ENCODE measurements at regions of chr4 and their contacts with region 1.

Region 1: DNA sequence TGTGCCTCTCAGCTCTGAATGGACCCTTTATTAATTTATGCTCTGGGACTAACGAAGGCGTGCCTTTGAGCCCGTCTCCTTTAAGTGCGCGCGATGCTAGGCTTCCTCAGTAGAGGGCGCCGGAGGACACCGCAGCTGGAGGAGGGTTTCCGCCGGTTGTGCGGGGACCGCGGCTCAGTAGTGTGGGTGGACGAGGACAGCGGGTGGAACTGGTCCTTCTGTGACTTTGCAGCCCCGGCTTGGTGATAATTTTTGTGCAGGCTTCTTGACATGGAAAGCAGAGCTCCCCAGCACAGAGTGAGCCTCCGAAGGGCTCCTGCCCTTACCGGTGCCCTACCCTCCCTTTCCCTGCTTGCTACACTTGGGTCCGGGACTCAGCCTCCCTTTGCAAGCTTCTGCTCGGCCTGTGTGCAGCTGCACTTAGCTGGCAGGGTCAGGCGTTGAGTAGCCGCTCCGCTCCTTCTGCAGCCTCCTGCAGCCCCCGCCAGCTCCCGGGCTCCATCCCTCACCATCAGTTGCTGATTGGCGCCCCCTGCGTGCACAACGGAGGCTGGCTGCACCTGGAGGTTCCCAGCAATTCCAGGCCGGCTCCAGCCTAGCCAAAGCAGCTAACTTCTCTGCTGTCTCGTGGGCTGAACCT is 26.8 kb upstream of the BOD1L1 start:
- DNase-seq: peak; percentile 62
- H3K4me3 ChIP-seq: peak overlapping the region; percentile 54 to 61 (median 54)
- H3K27ac ChIP-seq: no peak overlapping the region
- H3K4me1 ChIP-seq: peaks cover 18% of the 10 kb centered on the region
- H3K27me3 ChIP-seq: no peaks in the 10 kb centered on the region
- CTCF ChIP-seq: peak; percentile 90 to 96

Region 2: DNA sequence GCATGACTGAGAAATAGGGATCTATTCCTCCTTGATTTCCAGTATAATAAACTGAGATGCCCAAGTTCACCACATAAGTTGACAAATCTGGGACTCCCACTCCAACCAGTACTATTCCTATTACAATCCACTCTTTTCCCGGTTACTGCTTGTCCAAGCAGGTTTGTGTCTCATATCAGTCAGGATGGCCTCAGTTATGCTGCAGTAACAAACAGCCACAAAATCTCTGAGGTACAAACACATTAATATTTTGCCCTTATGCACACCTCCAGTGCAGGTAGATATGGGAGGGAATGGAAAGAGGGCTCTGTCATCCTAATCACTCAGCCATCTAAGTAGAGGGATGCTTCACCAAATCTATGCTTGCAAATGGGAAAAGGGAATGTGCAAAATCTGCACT is 377.9 kb before region 1 on chr4:
- CTCF ChIA-PET with region 1: no interaction called
- dilution Hi-C with region 1: no loop called
- in situ Hi-C with region 1: no loop called
- intact Hi-C with region 1: no loop called
- DNase-seq: no peak
- H3K4me3 ChIP-seq: no peak overlapping the region
- H3K27ac ChIP-seq: no peak overlapping the region
- H3K4me1 ChIP-seq: no peaks in the 10 kb centered on the region
- H3K27me3 ChIP-seq: no peaks in the 10 kb centered on the region
- CTCF ChIP-seq: no peak

Region 3: GRCh38 chr4:13881892-13882291 is 227.6 kb after region 1 on chr4:
- CTCF ChIA-PET with region 1: no interaction called
- dilution Hi-C with region 1: no loop called
- in situ Hi-C with region 1: loop called in 1 of 2 experiments (anchors 25 kb)
- intact Hi-C with region 1: loop called (anchors 1 kb)
- DNase-seq: no peak
- H3K4me3 ChIP-seq: no peak overlapping the region
- H3K27ac ChIP-seq: no peak overlapping the region
- H3K4me1 ChIP-seq: no peaks in the 10 kb centered on the region
- H3K27me3 ChIP-seq: no peaks in the 10 kb centered on the region
- CTCF ChIP-seq: peak in 1 of 2 donors; percentile 46

Region 4: DNA sequence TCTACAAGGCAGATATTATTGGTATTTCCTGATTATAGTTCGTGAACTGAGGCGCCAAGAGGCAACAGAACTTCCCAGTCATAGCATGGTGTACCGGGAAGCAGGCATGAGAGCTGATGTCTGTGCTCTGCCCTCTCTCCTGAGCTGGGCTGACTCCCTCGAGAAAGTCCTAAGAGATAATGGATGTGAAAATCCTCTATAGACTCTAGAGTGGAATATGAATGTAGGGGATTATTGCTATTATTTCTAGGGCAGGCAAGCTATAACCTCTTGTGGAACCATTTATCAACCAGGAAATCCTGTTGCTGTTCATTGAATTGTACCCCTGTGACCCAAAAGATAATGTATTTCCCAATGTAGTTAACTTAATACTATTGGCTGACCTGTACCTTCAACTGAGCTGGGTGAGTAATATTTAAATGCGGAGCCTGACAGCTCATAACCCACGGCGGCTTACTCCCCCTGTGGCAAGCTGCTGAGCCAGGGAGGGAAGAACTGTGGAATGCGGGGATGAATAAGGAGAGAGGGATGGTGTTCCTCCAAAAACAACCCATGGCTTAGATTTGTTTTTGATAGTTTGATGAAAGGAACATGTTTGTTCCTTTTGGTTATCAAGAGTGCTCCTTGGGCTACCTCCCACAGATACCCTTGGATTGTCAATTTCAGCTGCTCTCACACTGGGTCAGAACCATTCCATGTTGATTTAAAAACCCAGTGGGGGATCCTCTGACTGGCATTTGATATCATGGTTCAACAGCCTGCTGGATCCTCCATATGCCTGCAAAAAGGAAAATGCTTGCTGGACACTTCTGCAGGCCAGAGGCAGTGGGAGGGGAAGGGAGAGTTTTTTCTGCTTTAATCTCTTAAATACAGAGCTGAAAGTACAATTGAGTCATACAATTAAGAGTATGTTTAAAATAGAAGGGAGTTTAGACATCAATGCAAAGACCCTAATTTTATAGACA is 312.2 kb after region 1 on chr4:
- CTCF ChIA-PET with region 1: no interaction called
- dilution Hi-C with region 1: no loop called
- in situ Hi-C with region 1: no loop called
- intact Hi-C with region 1: loop called (anchors 5 kb)
- DNase-seq: peak; percentile 46
- H3K4me3 ChIP-seq: no peak overlapping the region
- H3K27ac ChIP-seq: no peak overlapping the region
- H3K4me1 ChIP-seq: peaks cover 8% of the 10 kb centered on the region
- H3K27me3 ChIP-seq: no peaks in the 10 kb centered on the region
- CTCF ChIP-seq: no peak

Region 5: GRCh38 chr4:14294611-14295010 is 640.3 kb after region 1 on chr4:
- CTCF ChIA-PET with region 1: no interaction called
- dilution Hi-C with region 1: no loop called
- in situ Hi-C with region 1: no loop called
- intact Hi-C with region 1: loop called (anchors 10 kb)
- DNase-seq: no peak
- H3K4me3 ChIP-seq: no peak overlapping the region
- H3K27ac ChIP-seq: no peak overlapping the region
- H3K4me1 ChIP-seq: peaks cover 6% of the 10 kb centered on the region
- H3K27me3 ChIP-seq: no peaks in the 10 kb centered on the region
- CTCF ChIP-seq: no peak

Region 6: DNA sequence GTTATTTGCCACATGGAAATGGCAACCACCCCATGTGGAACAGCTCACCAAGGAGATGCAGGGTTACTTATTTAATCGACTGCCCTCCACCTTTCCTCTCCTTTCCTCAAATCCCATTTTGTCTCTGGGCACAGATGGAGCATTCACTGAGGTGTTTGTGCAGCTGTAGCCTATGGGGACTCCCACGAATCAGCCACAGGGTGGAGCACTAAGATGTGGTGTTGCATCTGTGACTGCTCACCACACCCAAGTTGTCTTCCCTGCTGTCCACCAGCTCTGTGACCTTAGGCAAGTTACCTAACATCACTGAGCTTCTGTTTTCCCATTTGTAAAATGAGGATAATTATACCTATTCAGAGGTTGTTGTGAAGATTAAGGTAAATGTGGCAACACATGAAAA is 1095.6 kb after region 1 on chr4:
- CTCF ChIA-PET with region 1: no interaction called
- dilution Hi-C with region 1: no loop called
- in situ Hi-C with region 1: no loop called
- intact Hi-C with region 1: loop called (anchors 10 kb)
- DNase-seq: peak; percentile 47
- H3K4me3 ChIP-seq: no peak overlapping the region
- H3K27ac ChIP-seq: no peak overlapping the region
- H3K4me1 ChIP-seq: no peaks in the 10 kb centered on the region
- H3K27me3 ChIP-seq: no peaks in the 10 kb centered on the region
- CTCF ChIP-seq: peak; percentile 41 to 76

Region 7: DNA sequence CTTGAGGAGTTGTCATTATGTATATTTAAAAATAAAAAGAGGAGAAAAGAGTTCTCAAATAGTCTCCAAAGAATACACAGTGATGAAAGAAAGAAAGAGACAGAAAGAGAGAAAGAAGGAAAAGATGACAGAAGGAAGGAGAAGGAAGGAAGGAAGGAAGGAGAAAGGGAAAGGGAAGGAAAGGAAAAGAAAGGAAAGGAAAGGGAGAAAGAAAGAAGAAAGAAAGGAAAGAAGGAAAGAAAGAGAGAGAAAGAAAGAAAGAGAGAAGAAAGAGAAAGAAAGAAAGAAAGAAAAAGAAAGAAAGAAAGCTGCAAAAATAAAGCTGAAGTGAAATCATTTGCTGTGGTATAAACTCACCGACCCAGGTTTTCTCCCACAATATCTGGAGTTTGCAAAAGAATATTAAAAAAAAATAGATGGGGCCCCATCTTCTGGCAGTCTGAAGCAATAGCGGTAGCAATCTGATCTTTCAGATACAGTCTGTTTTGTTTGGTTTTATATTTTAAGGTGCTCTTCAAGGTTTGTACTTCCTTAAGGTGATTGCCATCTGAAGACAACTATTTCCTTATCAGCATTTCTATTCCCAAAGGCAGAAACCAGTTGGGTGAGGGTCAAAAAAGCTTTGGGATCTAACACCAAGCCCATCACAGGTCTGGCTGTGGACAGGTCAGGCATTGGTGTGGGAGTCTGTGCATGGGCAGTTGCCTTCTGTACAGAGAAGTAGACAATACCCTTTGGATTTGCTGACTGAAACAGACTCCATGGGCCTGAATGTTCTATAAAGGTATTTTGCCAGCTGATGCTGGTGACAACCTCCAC is 1508.4 kb after region 1 on chr4:
- CTCF ChIA-PET with region 1: no interaction called
- dilution Hi-C with region 1: no loop called
- in situ Hi-C with region 1: no loop called
- intact Hi-C with region 1: loop called (anchors 5 kb)
- DNase-seq: no peak
- H3K4me3 ChIP-seq: no peak overlapping the region
- H3K27ac ChIP-seq: no peak overlapping the region
- H3K4me1 ChIP-seq: no peaks in the 10 kb centered on the region
- H3K27me3 ChIP-seq: peaks cover 3% of the 10 kb centered on the region
- CTCF ChIP-seq: peak; percentile 23 to 53